Vagina (tissue), 2 donors: ENCODE measurements at regions of chr3 and their contacts with region 1.

Region 1: DNA sequence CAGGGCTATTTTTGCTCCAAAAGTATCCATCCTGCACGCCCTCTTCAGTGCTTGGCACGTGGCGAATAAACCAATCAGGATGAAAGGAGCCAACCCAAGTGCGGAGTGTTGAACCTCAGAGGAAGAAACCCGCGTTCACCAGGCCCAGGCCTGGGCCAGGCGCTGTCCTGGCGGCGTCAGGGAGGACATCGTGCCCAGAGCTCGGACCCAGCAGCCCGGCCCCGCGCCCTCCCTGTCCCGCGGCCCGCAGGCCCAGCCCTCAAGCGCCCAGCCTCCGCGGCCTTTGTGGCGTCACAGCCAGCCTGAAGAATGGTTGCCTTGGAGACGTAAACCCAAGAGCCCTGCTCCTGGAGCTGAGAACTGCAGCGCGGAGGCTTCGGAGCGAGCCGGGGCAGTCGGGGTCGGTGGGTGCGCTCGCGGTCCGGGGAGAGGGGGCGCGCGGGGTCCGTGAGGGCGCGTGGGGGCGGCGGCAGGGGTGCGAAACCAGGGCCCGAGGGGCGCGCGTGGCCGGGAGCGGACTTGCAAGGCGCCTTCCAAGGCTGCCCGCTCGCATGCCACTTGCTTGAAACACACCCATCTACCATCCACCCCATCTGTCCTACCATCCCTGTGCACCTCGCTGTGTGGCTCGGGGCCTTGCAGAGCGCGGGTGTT is at the start of gene CFAP100:
- DNase-seq: no peak
- H3K4me3 ChIP-seq: peak within 1 kb of the TSS; percentile 24 to 35
- H3K27ac ChIP-seq: no peak within 1 kb of the TSS
- H3K4me1 ChIP-seq: peaks cover 8% of the 10 kb centered on the region
- H3K27me3 ChIP-seq: no peaks in the 10 kb centered on the region
- CTCF ChIP-seq: no peak
- POLR2A ChIP-seq: no peak
- total RNA-seq, gene CFAP100: not detected

Region 2: GRCh38 chr3:126129181-126129891 is 265.4 kb before region 1 on chr3:
- intact Hi-C with region 1: loop called (anchors 5 kb)
- DNase-seq: peak; percentile 78 to 92
- H3K4me3 ChIP-seq: no peak overlapping the region
- H3K27ac ChIP-seq: no peak overlapping the region
- H3K4me1 ChIP-seq: no peaks in the 10 kb centered on the region
- H3K27me3 ChIP-seq: no peaks in the 10 kb centered on the region
- CTCF ChIP-seq: no peak
- POLR2A ChIP-seq: no peak

Region 3: GRCh38 chr3:126134219-126134975 is 260.3 kb before region 1 on chr3:
- intact Hi-C with region 1: loop called (anchors 5 kb)
- DNase-seq: peak; percentile 81 to 87
- H3K4me3 ChIP-seq: no peak overlapping the region
- H3K27ac ChIP-seq: no peak overlapping the region
- H3K4me1 ChIP-seq: no peaks in the 10 kb centered on the region
- H3K27me3 ChIP-seq: no peaks in the 10 kb centered on the region
- CTCF ChIP-seq: peak; percentile 70 to 87 (median 80)
- POLR2A ChIP-seq: no peak